H1 (cell line): ENCODE measurements at regions of chr3 and their contacts with region 1.

Region 1: DNA sequence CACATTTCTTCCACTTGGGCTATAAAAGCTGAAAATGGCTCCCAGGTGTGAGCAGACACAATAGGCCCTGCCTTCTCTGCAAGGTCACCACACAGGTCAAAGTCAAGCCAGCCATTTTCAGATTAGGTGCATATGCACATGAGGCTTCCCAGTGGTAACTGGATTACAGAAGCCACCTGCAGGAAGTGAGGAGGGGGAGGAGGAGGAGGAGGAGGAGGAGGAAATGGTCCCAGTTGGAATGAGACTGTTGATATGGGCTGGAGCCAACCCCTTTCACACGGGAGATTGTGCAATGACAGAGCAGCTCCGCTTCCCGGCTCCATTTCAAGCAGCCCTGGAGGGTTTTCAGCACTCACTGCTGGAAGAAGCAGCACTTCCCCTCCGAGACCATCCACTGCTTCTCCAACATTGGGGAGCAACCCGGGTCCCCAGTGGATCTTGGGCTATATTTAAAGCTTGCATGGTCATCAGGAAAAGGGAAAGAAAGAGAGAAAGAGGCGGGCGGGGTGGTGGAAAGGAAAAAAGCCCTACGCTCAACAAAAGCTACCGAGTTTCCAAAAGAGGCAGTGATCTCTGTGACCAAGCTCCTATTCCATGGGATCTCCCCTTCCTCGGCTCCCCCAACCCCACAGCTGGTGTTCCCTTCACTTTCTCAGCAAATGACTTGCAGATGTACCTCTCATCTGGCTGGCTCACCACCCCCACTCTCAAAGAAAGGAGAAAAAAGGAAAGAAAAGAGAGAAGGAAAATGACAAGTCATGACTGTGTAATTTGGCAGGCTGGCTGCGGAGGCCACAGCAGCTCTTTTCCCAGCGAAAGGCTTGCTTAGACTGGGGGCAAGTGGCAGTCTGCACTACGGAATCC is 58.3 kb downstream of the LRIG1 start:
- DNase-seq: peak; percentile 71 to 89
- H3K4me3 ChIP-seq: peak overlapping the region in 3 of 4 experiments; percentile 2 to 49 (median 3); a peak in 5 of 8 replicates
- H3K27ac ChIP-seq: peak overlapping the region; percentile 65
- H3K4me1 ChIP-seq: peaks cover 39 to 53% (median 41%) of the 10 kb centered on the region in 4 experiments
- H3K27me3 ChIP-seq: no peaks in the 10 kb centered on the region
- CTCF ChIP-seq: no peak
- EP300 ChIP-seq: 0 out of 3 replicates have a peak, but pooled peaks of 1 of the 2 experiments have one; percentile 78
- POLR2A ChIP-seq: peak in 1 of 2 experiments; percentile 81; a peak in 2 of 3 replicates
- RAD21 ChIP-seq: no peak; a peak in 1 of 4 replicates

Region 2: DNA sequence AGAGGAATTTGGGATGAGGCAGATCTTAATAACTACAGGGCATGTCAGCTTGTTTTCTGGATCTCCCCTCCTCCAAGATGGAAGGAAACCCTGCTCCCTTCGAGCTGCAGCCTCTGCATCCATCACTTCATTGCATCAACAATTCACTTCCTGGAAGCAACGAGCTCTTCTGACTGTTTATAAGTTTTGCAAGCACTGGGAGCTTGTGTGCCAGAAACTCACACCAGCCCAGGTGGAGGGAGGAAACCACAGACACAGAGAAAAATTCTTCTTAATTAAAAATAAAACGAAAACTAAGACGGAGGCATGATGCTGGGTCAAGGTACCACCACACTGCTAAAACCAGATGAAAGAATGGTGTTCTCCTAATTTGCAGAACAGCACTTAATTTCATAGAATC is 47.7 kb after region 1 on chr3:
- CTCF ChIA-PET with region 1: interaction called, 3 read pairs
- POLR2A ChIA-PET with region 1: interaction called, 51 read pairs
- DNase-seq: no peak
- H3K4me3 ChIP-seq: no peak overlapping the region
- H3K27ac ChIP-seq: no peak overlapping the region
- H3K4me1 ChIP-seq: peaks cover 6 to 52% (median 39%) of the 10 kb centered on the region in 4 experiments
- H3K27me3 ChIP-seq: no peaks in the 10 kb centered on the region
- CTCF ChIP-seq: no peak
- EP300 ChIP-seq: no peak
- POLR2A ChIP-seq: no peak; a peak in 1 of 3 replicates
- RAD21 ChIP-seq: no peak